ENCODE measurements at regions of chr20 and their contacts with region 1.

Region 1: GRCh38 chr20:35303735-35304491 is 11.7 kb upstream of the FAM83C start:
- DNase-seq: no peak
- H3K4me3 ChIP-seq: no peak overlapping the region
- H3K27ac ChIP-seq: peak overlapping the region; percentile 93
- H3K27me3 ChIP-seq: no peaks in the 10 kb centered on the region
- CTCF ChIP-seq: peak; percentile 94

Region 2: GRCh38 chr20:35156978-35157377 is 146.9 kb before region 1 on chr20:
- CTCF ChIA-PET with region 1: no interaction called
- POLR2A ChIA-PET with region 1: no interaction called
- DNase-seq: no peak
- H3K4me3 ChIP-seq: no peak overlapping the region
- H3K27ac ChIP-seq: no peak overlapping the region
- H3K27me3 ChIP-seq: no peaks in the 10 kb centered on the region
- CTCF ChIP-seq: no peak

Region 3: GRCh38 chr20:35252037-35252461 is 51.9 kb before region 1 on chr20:
- CTCF ChIA-PET with region 1: no interaction called
- POLR2A ChIA-PET with region 1: no interaction called
- DNase-seq: no peak
- H3K4me3 ChIP-seq: no peak overlapping the region
- H3K27ac ChIP-seq: no peak overlapping the region
- H3K27me3 ChIP-seq: peaks cover 4% of the 10 kb centered on the region
- CTCF ChIP-seq: no peak

Region 4: GRCh38 chr20:35284267-35284991 is 19.5 kb before region 1 on chr20 and contains the start of gene EIF6:
- CTCF ChIA-PET with region 1: interaction called, 5 read pairs
- POLR2A ChIA-PET with region 1: interaction called, 13 read pairs
- DNase-seq: peak; percentile 55
- H3K4me3 ChIP-seq: peak within 1 kb of the TSS; percentile 95
- H3K27ac ChIP-seq: peak within 1 kb of the TSS; percentile 75
- H3K27me3 ChIP-seq: no peaks in the 10 kb centered on the region
- CTCF ChIP-seq: no peak
- polyA plus RNA-seq, gene EIF6: 133 and 157 TPM in 2 replicates

Region 5: DNA sequence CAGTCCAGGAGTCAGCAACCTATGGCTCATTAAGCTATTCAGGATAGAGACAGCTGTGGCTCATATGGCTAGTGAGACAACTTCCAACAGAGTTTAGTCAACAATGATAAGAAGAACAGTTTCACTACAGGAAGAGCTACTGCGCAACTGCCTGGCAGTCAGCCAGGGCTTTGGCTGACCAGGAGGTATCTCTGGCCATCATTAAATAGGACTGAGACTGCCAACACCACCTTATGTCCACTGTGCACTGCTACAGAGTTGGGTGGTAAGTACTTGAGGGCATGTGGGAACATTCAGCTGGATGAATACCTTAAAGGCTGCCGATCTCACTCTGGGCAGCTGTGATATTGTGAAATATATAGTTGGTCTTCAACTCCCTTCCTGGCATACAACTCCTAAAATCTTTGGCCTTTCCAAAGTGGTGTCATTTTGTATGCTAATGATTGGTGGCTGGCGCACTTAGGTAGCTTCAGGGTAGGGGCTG is 40.5 kb after region 1 on chr20:
- CTCF ChIA-PET with region 1: interaction called, 22 read pairs
- POLR2A ChIA-PET with region 1: interaction called, 8 read pairs
- DNase-seq: peak; percentile 70
- H3K4me3 ChIP-seq: no peak overlapping the region
- H3K27ac ChIP-seq: peak overlapping the region; percentile 34
- H3K27me3 ChIP-seq: no peaks in the 10 kb centered on the region
- CTCF ChIP-seq: no peak

Region 6: DNA sequence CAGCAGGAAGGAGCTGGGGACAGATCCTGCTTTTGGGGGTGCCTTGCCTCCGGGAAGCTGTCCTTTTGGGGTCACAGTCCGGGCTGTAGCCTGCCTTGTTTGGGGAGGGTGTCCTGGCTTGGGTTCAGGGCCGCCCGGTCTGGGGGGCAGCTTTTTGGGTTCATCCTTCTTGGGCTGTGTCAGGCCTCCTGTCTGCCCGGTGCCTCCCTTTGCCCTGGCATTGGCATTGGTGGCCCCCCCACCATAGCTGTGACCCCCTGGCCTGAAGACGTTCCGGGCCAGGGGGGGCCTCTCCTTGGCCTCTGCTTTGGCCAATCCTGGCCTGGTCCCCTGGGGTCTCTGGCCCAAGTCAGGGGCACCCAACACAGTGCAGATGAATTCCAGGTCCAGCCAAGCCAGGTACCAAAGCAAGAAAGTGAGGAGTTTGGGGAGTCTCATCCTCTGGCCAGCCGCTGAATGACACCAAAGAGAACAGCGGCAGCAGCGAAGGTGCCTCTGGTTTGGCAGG is 133.6 kb after region 1 on chr20:
- CTCF ChIA-PET with region 1: interaction called, 120 read pairs
- POLR2A ChIA-PET with region 1: interaction called, 6 read pairs
- DNase-seq: no peak
- H3K4me3 ChIP-seq: peak overlapping the region; percentile 71
- H3K27ac ChIP-seq: peak overlapping the region; percentile 82
- H3K27me3 ChIP-seq: no peaks in the 10 kb centered on the region
- CTCF ChIP-seq: no peak

Region 7: GRCh38 chr20:35454881-35455609 is 151.1 kb after region 1 on chr20 and contains the start of gene CEP250:
- CTCF ChIA-PET with region 1: interaction called, 77 read pairs
- POLR2A ChIA-PET with region 1: interaction called, 10 read pairs
- DNase-seq: peak; percentile 81
- H3K4me3 ChIP-seq: peak within 1 kb of the TSS; percentile 91
- H3K27ac ChIP-seq: peak within 1 kb of the TSS; percentile 95
- H3K27me3 ChIP-seq: no peaks in the 10 kb centered on the region
- CTCF ChIP-seq: no peak
- polyA plus RNA-seq, gene CEP250: 16.8 and 21.3 TPM in 2 replicates